HepG2 (cell line): ENCODE measurements at regions of chr17 and their contacts with region 1.

Region 1: DNA sequence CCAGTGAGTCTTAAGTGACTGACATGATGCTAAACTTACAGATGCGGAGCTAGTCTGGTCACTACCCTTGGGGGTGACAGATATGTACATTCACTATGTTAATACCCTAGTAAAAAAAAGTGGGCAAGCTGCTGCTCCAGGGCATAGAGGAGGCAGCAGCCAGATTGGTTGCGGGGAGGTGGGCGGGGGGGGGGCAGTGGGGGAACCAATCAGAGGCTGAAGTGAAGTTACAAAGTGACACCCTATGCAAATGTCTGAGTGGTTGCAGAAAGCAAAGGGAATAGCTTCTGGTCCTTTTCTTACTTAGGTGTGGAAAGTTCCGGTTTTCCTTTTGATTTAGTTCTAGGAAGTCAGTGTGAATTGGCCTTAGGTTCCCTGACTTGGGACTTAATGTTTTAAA is 12.1 kb downstream of the NDEL1 start:
- DNase-seq: peak; percentile 57
- ATAC-seq: peak; percentile 74
- H3K4me3 ChIP-seq: peak overlapping the region in 1 of 3 experiments; percentile 31; a peak in 1 of 6 replicates
- H3K27ac ChIP-seq: peak overlapping the region; percentile 73
- H3K4me1 ChIP-seq: peaks cover 85% of the 10 kb centered on the region
- H3K27me3 ChIP-seq: no peaks in the 10 kb centered on the region
- CTCF ChIP-seq: no peak
- EP300 ChIP-seq: no peak
- POLR2A ChIP-seq: no peak
- RAD21 ChIP-seq: no peak

Region 2: GRCh38 chr17:8409966-8410864 is 37.6 kb before region 1 on chr17:
- CTCF ChIA-PET with region 1: interaction called, 4 read pairs
- POLR2A ChIA-PET with region 1: no interaction called
- in situ Hi-C with region 1: loop called (anchors 5 kb)
- intact Hi-C with region 1: loop called (anchors 5 kb)
- DNase-seq: peak; percentile 80
- ATAC-seq: peak; percentile 80
- H3K4me3 ChIP-seq: peak overlapping the region in 1 of 3 experiments; percentile 30; a peak in 1 of 6 replicates
- H3K27ac ChIP-seq: no peak overlapping the region
- H3K4me1 ChIP-seq: peaks cover 64% of the 10 kb centered on the region
- H3K27me3 ChIP-seq: no peaks in the 10 kb centered on the region
- CTCF ChIP-seq: peak; percentile 94
- EP300 ChIP-seq: no peak
- POLR2A ChIP-seq: no peak
- RAD21 ChIP-seq: peak; percentile 78

Region 3: GRCh38 chr17:8426094-8426720 is 21.6 kb before region 1 on chr17:
- CTCF ChIA-PET with region 1: no interaction called
- POLR2A ChIA-PET with region 1: no interaction called
- in situ Hi-C with region 1: no loop called
- intact Hi-C with region 1: no loop called
- DNase-seq: no peak
- ATAC-seq: no peak
- H3K4me3 ChIP-seq: no peak overlapping the region
- H3K27ac ChIP-seq: no peak overlapping the region
- H3K4me1 ChIP-seq: peaks cover 60% of the 10 kb centered on the region
- H3K27me3 ChIP-seq: no peaks in the 10 kb centered on the region
- CTCF ChIP-seq: no peak
- EP300 ChIP-seq: no peak
- POLR2A ChIP-seq: no peak
- RAD21 ChIP-seq: no peak